Pancreas (tissue), 10 donors: ENCODE measurements at regions of chr15 and their contacts with region 1.

Region 1: GRCh38 chr15:60358935-60359682 is 38.7 kb downstream of the ANXA2 start:
- DNase-seq: no peak
- ATAC-seq: peak; percentile 21 to 57 (median 48)
- H3K4me3 ChIP-seq: no peak overlapping the region
- H3K27ac ChIP-seq: no peak overlapping the region
- H3K4me1 ChIP-seq: no peaks in the 10 kb centered on the region
- H3K27me3 ChIP-seq: no peaks in the 10 kb centered on the region
- CTCF ChIP-seq: no peak

Region 2: GRCh38 chr15:60423537-60423936 is 64.4 kb after region 1 on chr15:
- intact Hi-C with region 1: loop called in 1 of 3 experiments (anchors 10 kb)
- DNase-seq: no peak
- ATAC-seq: peak in 3 of 4 donors; percentile 44 to 70 (median 47)
- H3K4me3 ChIP-seq: no peak overlapping the region
- H3K27ac ChIP-seq: no peak overlapping the region
- H3K4me1 ChIP-seq: no peaks in the 10 kb centered on the region
- H3K27me3 ChIP-seq: no peaks in the 10 kb centered on the region
- CTCF ChIP-seq: no peak

Region 3: DNA sequence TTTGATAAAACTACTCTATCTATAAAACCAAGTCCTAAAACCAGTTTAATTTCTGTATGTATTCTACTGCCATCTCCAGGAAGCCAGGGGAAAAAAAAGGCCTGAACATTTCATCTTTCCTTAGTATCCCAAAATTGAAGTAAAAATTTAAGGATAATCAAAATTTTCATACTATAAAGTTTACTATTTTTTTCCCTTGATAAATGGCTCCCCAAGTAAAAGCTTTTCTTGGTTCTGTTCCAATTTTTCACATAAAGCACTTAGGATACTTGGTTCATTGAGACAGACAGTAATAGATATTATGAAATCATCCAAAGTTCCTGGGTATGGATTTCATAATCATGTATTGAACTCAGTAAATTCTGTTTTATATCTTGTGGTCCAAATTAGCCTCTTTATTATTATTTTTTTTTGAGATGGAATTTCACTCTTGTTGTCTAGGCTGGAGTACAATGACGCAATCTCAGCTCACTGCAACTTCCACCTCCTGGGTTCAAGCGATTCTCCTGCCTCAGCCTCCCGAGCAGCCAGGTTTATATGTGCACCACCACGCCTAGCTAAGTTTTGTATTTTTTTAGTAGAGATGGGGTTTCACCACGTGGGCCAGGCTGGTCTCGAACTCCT is 85.3 kb after region 1 on chr15:
- intact Hi-C with region 1: loop called in 1 of 3 experiments (anchors 10 kb)
- DNase-seq: no peak
- ATAC-seq: peak in 2 of 4 donors; percentile 46 to 60
- H3K4me3 ChIP-seq: no peak overlapping the region
- H3K27ac ChIP-seq: no peak overlapping the region
- H3K4me1 ChIP-seq: no peaks in the 10 kb centered on the region
- H3K27me3 ChIP-seq: no peaks in the 10 kb centered on the region
- CTCF ChIP-seq: peak in 2 of 4 donors; percentile 6 to 16